ENCODE measurements at regions of chr11 and their contacts with region 1.

Region 1: DNA sequence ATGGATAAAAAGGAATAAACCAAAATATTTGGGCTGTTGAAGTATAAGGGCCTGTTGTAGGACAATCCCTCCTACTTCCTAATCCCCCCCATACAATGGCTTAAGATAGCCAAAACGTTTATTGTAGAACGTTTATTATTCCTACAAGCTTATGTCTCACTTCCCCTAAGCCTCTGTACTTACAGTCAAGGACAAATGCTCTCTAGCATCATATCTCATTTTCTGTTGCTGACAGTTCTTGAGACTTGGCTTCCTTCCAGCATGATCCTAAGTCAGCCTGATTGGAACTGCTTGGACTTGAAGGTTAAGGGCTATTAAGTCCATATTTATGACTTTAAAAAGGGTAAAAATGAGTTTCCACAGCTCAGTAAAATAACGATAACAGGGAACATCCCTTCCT is 8.8 kb downstream of the MISFA start:
- DNase-seq: no peak
- ATAC-seq: no peak
- H3K4me3 ChIP-seq: no peak overlapping the region
- H3K27ac ChIP-seq: no peak overlapping the region
- H3K4me1 ChIP-seq: no peaks in the 10 kb centered on the region
- H3K27me3 ChIP-seq: no peaks in the 10 kb centered on the region
- CTCF ChIP-seq: no peak

Region 2: DNA sequence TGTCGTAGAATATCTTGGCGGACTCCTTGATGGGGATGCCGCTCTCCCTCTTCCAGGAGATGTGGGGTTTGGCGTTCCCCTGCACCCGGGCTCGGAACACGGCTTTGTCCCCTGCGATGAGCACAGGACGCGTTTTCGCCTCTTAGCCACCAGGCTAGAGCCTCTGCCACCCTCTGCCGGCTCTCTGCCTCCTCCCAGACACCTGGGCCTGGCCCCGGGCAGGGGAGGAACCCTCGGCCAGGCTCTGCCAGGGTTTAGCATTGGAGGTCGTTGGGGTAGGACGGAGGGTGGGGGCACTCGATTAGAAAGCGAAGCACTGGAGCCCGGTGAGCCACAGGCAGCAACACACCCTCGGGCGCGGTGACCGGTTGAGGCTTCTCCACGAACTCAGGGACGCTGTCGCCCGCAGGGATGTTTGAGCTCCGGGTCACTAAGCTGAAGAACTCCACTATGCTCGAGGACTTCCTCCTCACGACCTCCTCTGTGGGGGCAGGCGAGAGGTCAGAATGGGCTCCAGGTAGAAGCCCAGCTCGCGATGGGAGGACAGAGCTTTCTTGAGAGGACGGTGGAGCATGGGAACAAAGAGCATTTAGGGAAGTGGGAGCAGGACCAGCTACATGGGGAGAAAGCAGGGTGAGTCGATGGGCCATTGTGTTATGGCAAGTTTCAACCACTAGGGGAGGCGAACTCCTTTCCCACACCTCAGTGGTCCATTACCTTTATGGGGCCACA is 113.4 kb after region 1 on chr11:
- CTCF ChIA-PET with region 1: interaction called, 10 read pairs
- POLR2A ChIA-PET with region 1: no interaction called
- intact Hi-C with region 1: no loop called
- DNase-seq: peak; percentile 37
- ATAC-seq: peak; percentile 75
- H3K4me3 ChIP-seq: peak overlapping the region; percentile 53; the same call in 1 of the 2 replicates
- H3K27ac ChIP-seq: no peak overlapping the region
- H3K4me1 ChIP-seq: no peaks in the 10 kb centered on the region
- H3K27me3 ChIP-seq: no peaks in the 10 kb centered on the region
- CTCF ChIP-seq: peak; percentile 64

Measured in PC-3 (cell line).